GM10248 (cell line): ENCODE measurements at regions of chr17 and their contacts with region 1.

Region 1: DNA sequence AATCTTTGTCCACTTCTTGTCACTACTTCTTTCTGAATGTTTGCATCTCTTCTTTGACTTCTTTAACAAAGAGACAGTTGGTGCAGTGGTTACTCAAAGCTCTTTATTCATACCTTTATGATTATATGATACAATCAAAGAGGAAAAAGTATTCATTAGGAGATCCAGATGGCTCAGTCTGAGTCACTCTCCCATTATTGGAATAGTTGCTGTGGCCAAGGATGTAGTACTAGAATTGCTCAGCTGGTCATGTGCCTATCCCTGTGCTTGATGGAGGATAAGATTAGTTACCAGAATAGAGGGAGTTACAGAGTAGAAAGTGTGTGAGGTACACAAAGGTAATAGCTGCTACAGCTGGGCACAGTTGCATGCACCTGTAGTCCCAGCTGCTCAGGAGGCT is 18.3 kb downstream of the BCAS3 start:
- DNase-seq: no peak
- CTCF ChIP-seq: no peak

Region 2: GRCh38 chr17:60720763-60721531 is 25.0 kb after region 1 on chr17:
- CTCF ChIA-PET with region 1: interaction called, 10 read pairs
- POLR2A ChIA-PET with region 1: no interaction called
- DNase-seq: peak; percentile 64
- CTCF ChIP-seq: peak; percentile 77

Region 3: GRCh38 chr17:60926466-60927157 is 230.7 kb after region 1 on chr17:
- CTCF ChIA-PET with region 1: no interaction called
- POLR2A ChIA-PET with region 1: no interaction called
- DNase-seq: no peak
- CTCF ChIP-seq: no peak